Naive thymus-derived CD8-positive, alpha-beta T cell (primary cell): ENCODE measurements at regions of chr14 and their contacts with region 1.

Region 1: DNA sequence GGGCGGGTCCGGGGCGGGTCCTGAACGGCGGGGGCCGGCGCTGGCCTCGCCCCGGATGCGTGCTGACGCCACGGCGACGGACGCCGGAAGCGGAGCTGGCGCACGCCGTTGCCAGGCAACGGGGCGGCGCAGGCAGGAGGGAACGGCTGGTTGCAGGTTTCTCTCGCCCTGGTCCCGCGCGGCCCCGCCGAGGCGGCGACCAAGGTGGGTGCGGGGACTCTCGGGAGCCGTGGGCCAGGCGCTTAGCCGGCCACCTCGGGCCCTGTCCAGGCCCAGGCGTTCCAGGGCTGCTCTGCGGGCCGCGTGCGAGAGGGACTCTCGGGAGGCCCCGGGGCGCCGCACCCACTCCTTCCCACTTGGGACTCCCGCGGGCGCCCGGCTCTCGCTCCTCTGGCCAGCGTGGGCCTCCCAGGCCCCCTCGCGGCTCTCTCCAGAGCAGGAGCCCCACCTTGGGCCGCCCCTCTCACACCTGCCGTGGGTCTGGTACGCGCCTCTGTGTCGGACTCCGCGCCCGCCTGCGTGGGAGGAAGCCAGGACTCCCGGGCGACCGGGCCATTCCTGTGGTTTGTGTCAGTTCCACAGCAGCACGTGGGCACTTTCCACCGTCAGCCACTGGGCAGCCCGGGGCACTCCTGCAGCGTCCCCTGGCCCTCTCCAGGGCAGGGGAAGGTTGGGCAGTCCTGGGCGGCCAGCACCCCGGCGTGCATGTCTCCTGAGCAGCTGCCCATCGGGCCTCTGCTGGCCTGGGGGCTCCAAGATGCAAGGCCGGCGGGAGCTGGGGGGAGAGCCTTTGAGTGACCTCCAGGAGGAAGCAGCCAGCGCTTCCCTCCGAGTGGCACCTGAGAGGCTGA is at the start of gene CLBA1:
- DNase-seq: peak; percentile 83 to 92 (median 89)
- ATAC-seq: peak; percentile 88 to 95
- H3K4me3 Mint-ChIP-seq: peak within 1 kb of the TSS; percentile 71 to 87 (median 78)
- H3K27ac Mint-ChIP-seq: peak within 1 kb of the TSS; percentile 25 to 94 (median 86)
- H3K4me1 Mint-ChIP-seq: peaks cover 0 to 11% (median 4%) of the 10 kb centered on the region in 4 donors
- H3K27me3 Mint-ChIP-seq: peaks cover 0 to 3% (median 0%) of the 10 kb centered on the region in 5 donors
- polyA plus RNA-seq, gene CLBA1: 0.67 to 2.3 (median 1.2) TPM

Region 2: GRCh38 chr14:105020815-105021655 is 35.1 kb after region 1 on chr14 and contains the start of gene CDCA4:
- POLR2A ChIA-PET with region 1: interaction called, 17 read pairs
- DNase-seq: peak; percentile 93 to 100 (median 97)
- ATAC-seq: peak; percentile 83 to 84
- H3K4me3 Mint-ChIP-seq: peak within 1 kb of the TSS; percentile 87 to 95 (median 92)
- H3K27ac Mint-ChIP-seq: peak within 1 kb of the TSS; percentile 91 to 97 (median 94)
- H3K4me1 Mint-ChIP-seq: peaks cover 22 to 76% (median 52%) of the 10 kb centered on the region in 4 donors
- H3K27me3 Mint-ChIP-seq: no peaks in the 10 kb centered on the region
- polyA plus RNA-seq, gene CDCA4: 8.2 to 12.0 (median 11.3) TPM